ENCODE measurements at regions of chr11 and their contacts with region 1.

Region 1: DNA sequence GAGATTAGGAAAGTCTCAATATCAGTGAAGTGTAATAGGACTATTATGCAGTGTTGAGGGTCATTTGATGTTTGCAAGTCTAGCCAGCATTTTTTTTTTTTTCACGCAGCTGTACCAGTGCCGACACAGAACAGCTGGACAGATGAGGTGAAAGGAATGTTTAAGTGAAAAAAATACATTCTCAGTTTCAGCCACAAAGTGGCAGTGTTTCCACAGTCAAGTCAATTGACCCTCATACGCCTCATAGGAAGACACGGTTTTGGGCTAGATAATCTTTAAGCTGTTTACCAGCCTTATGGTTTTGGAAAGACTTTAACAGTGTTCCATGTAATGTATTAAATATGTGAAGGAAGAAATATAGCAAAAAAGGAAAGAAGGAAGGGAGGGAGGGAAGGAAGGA is 349.9 kb upstream of the ANO3 start:
- DNase-seq: no peak
- H3K4me3 ChIP-seq: no peak overlapping the region
- H3K27ac ChIP-seq: no peak overlapping the region
- H3K4me1 ChIP-seq: no peaks in the 10 kb centered on the region
- H3K27me3 ChIP-seq: no peaks in the 10 kb centered on the region
- CTCF ChIP-seq: peak; percentile 15 to 45 (median 25)

Region 2: GRCh38 chr11:25838918-25839611 is 142.9 kb before region 1 on chr11:
- intact Hi-C with region 1: no loop called
- DNase-seq: no peak
- H3K4me3 ChIP-seq: no peak overlapping the region
- H3K27ac ChIP-seq: no peak overlapping the region
- H3K4me1 ChIP-seq: no peaks in the 10 kb centered on the region
- H3K27me3 ChIP-seq: no peaks in the 10 kb centered on the region
- CTCF ChIP-seq: no peak

Region 3: GRCh38 chr11:26028294-26028954 is 46.4 kb after region 1 on chr11:
- intact Hi-C with region 1: no loop called
- DNase-seq: no peak
- H3K4me3 ChIP-seq: no peak overlapping the region
- H3K27ac ChIP-seq: no peak overlapping the region
- H3K4me1 ChIP-seq: no peaks in the 10 kb centered on the region
- H3K27me3 ChIP-seq: no peaks in the 10 kb centered on the region
- CTCF ChIP-seq: no peak

Region 4: DNA sequence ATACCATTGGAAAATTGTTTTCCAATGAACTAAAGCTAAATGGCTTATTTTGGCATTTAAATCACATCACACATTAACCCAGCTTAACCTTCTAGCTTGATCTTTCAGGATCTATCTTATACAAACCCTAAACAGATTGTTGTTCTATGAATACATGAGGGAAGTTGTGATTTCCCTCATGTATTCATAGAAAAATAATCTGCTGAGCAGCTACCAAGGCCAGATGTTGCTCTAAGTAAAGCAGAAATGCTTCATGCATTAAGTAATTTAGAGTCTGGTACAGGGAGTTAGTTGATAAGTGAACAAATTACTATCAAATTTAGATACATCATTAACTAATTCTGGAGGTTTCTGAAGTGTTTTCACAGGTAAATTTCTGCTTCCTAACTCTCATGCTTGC is 145.3 kb after region 1 on chr11:
- intact Hi-C with region 1: no loop called
- DNase-seq: no peak
- H3K4me3 ChIP-seq: no peak overlapping the region
- H3K27ac ChIP-seq: no peak overlapping the region
- H3K4me1 ChIP-seq: no peaks in the 10 kb centered on the region
- H3K27me3 ChIP-seq: no peaks in the 10 kb centered on the region
- CTCF ChIP-seq: no peak

Region 5: GRCh38 chr11:26227296-26227695 is 245.3 kb after region 1 on chr11:
- intact Hi-C with region 1: loop called (anchors 5 kb)
- DNase-seq: no peak
- H3K4me3 ChIP-seq: no peak overlapping the region
- H3K27ac ChIP-seq: no peak overlapping the region
- H3K4me1 ChIP-seq: no peaks in the 10 kb centered on the region
- H3K27me3 ChIP-seq: no peaks in the 10 kb centered on the region
- CTCF ChIP-seq: peak in 1 of 3 experiments; percentile 28

Region 6: GRCh38 chr11:26276798-26277424 is 294.9 kb after region 1 on chr11:
- intact Hi-C with region 1: loop called (anchors 2 kb)
- DNase-seq: peak in 1 of 2 donors; percentile 65
- H3K4me3 ChIP-seq: no peak overlapping the region
- H3K27ac ChIP-seq: no peak overlapping the region
- H3K4me1 ChIP-seq: no peaks in the 10 kb centered on the region
- H3K27me3 ChIP-seq: no peaks in the 10 kb centered on the region
- CTCF ChIP-seq: peak; percentile 42 to 91 (median 83)